ENCODE measurements at regions of chr10 and their contacts with region 1.

Region 1: GRCh38 chr10:28302638-28303488 is at the start of gene MPP7:
- DNase-seq: peak; percentile 96
- ATAC-seq: peak; percentile 98
- H3K4me3 ChIP-seq: peak within 1 kb of the TSS; percentile 79
- H3K27ac ChIP-seq: peak within 1 kb of the TSS; percentile 34; the same call in 1 of the 2 replicates
- H3K4me1 ChIP-seq: peaks cover 16% of the 10 kb centered on the region; the same call in 1 of the 2 replicates
- H3K27me3 ChIP-seq: no peaks in the 10 kb centered on the region
- CTCF ChIP-seq: no peak
- total RNA-seq, gene MPP7: 8.9 and 9.1 TPM in 2 replicates

Region 2: DNA sequence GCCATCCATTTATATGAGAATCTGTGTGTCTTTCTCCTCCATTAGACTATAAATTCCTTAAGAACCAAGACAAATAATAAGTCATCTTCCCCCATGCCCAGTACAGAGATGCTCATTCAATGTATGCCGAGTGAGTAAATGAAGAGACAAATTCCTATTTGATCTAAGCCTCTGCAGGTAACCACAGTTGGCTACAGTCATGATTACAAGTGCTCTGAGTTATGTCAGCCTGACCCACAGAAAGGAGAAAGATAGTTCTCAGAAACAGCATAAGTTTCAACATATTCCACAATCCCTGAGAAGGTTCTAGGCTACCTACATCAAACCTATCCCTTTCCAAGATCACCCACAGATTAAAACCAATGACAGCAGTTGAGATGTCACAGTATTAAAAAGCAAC is 46.1 kb before region 1 on chr10:
- CTCF ChIA-PET with region 1: interaction called, 15 read pairs
- POLR2A ChIA-PET with region 1: interaction called, 5 read pairs
- intact Hi-C with region 1: loop called (anchors 1 kb)
- DNase-seq: peak; percentile 90
- ATAC-seq: peak; percentile 94
- H3K4me3 ChIP-seq: no peak overlapping the region
- H3K27ac ChIP-seq: peak overlapping the region; percentile 94
- H3K4me1 ChIP-seq: peaks cover 43% of the 10 kb centered on the region
- H3K27me3 ChIP-seq: no peaks in the 10 kb centered on the region
- CTCF ChIP-seq: no peak

Region 3: GRCh38 chr10:28381903-28382347 is 79.1 kb after region 1 on chr10:
- CTCF ChIA-PET with region 1: interaction called, 12 read pairs
- POLR2A ChIA-PET with region 1: interaction called, 3 read pairs
- intact Hi-C with region 1: loop called (anchors 1 kb)
- DNase-seq: peak; percentile 94
- ATAC-seq: peak; percentile 92
- H3K4me3 ChIP-seq: peak overlapping the region; percentile 67
- H3K27ac ChIP-seq: peak overlapping the region; percentile 76
- H3K4me1 ChIP-seq: peaks cover 3% of the 10 kb centered on the region; the same call in 1 of the 2 replicates
- H3K27me3 ChIP-seq: no peaks in the 10 kb centered on the region
- CTCF ChIP-seq: peak; percentile 92

Region 4: GRCh38 chr10:28393966-28394568 is 91.2 kb after region 1 on chr10:
- CTCF ChIA-PET with region 1: interaction called, 8 read pairs
- POLR2A ChIA-PET with region 1: interaction called, 16 read pairs
- intact Hi-C with region 1: no loop called
- DNase-seq: peak; percentile 66
- ATAC-seq: peak; percentile 93
- H3K4me3 ChIP-seq: no peak overlapping the region
- H3K27ac ChIP-seq: no peak overlapping the region
- H3K4me1 ChIP-seq: no peaks in the 10 kb centered on the region
- H3K27me3 ChIP-seq: no peaks in the 10 kb centered on the region
- CTCF ChIP-seq: peak; percentile 86